Naive thymus-derived CD4-positive, alpha-beta T cell (primary cell): ENCODE measurements at regions of chr1 and their contacts with region 1.

Region 1: DNA sequence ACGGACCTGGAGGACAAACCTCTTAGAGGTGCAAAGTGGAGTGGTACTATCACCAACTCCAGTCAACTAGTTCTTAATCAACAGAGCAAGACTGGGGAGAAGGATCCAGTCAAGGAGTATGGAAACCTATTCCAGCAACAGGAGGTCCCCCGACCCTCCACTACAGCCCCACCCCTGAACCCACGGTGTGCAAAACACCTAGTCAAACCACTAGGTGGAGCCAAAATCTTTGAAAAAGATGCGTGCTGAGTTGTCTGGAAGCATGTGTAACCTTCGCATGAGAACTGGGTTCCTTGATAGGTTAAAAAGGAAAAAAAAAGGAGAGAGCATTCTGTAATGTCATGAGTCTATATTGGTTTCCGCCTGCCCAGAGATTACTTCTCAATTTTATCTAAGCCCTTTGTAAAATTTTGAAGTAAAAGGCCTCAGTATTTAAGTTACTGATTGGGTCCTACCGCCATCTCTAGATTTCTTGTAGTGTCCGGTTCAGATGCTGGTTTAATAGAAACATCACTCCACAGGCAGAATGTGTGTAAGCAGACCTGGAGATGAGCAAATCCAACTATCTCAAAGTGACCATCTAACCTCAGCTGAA is 81.9 kb upstream of the HAO2 start:
- DNase-seq: peak in 6 of 9 donors; percentile 9 to 30 (median 19)
- ATAC-seq: no peak
- H3K4me3 ChIP-seq: no peak overlapping the region
- H3K4me3 Mint-ChIP-seq: no peak overlapping the region
- H3K27ac ChIP-seq: no peak overlapping the region
- H3K27ac Mint-ChIP-seq: no peak overlapping the region
- H3K4me1 ChIP-seq: no peaks in the 10 kb centered on the region
- H3K4me1 Mint-ChIP-seq: no peaks in the 10 kb centered on the region
- H3K27me3 ChIP-seq: no peaks in the 10 kb centered on the region
- H3K27me3 Mint-ChIP-seq: peaks cover 8 to 34% (median 15%) of the 10 kb centered on the region in 5 donors

Region 2: GRCh38 chr1:119327436-119328155 is 40.9 kb after region 1 on chr1:
- CTCF ChIA-PET with region 1: no interaction called
- POLR2A ChIA-PET with region 1: no interaction called
- intact Hi-C with region 1: loop called (anchors 1 to 5 kb)
- DNase-seq: peak in 6 of 9 donors; percentile 8 to 27 (median 24)
- ATAC-seq: peak; percentile 56
- H3K4me3 ChIP-seq: peak overlapping the region; percentile 61
- H3K4me3 Mint-ChIP-seq: peak overlapping the region; percentile 82 to 94 (median 89)
- H3K27ac ChIP-seq: no peak overlapping the region
- H3K27ac Mint-ChIP-seq: peak overlapping the region in 3 of 9 donors; percentile 22 to 24 (median 22)
- H3K4me1 ChIP-seq: peaks cover 0 to 7% of the 10 kb centered on the region in 2 donors
- H3K4me1 Mint-ChIP-seq: peaks cover 9 to 21% (median 15%) of the 10 kb centered on the region in 7 donors
- H3K27me3 ChIP-seq: no peaks in the 10 kb centered on the region
- H3K27me3 Mint-ChIP-seq: peaks cover 4 to 15% (median 10%) of the 10 kb centered on the region in 5 donors